Activated CD8-positive, alpha-beta T cell treated with anti-CD3 and anti-CD28 coated beads, Interleukin-2, amount 10 ng/mL, durations not matched to agents 7 days and 5 days (primary cell): ENCODE measurements at regions of chr12 and their contacts with region 1.

Region 1: GRCh38 chr12:120257041-120257821 is 8.3 kb downstream of the PXN start:
- DNase-seq: no peak
- ATAC-seq: no peak
- H3K4me3 Mint-ChIP-seq: no peak overlapping the region
- H3K27ac Mint-ChIP-seq: peak overlapping the region; percentile 1
- H3K4me1 Mint-ChIP-seq: peaks cover 81% of the 10 kb centered on the region
- H3K27me3 Mint-ChIP-seq: no peaks in the 10 kb centered on the region

Region 2: GRCh38 chr12:120234643-120235368 is 22.4 kb before region 1 on chr12:
- CTCF ChIA-PET with region 1: interaction called, 922 read pairs
- POLR2A ChIA-PET with region 1: interaction called, 9 read pairs
- DNase-seq: no peak
- ATAC-seq: no peak
- H3K4me3 Mint-ChIP-seq: no peak overlapping the region
- H3K27ac Mint-ChIP-seq: no peak overlapping the region
- H3K4me1 Mint-ChIP-seq: peaks cover 74% of the 10 kb centered on the region
- H3K27me3 Mint-ChIP-seq: no peaks in the 10 kb centered on the region